Mammary epithelial cell (primary cell): ENCODE measurements at regions of chr5 and their contacts with region 1.

Region 1: DNA sequence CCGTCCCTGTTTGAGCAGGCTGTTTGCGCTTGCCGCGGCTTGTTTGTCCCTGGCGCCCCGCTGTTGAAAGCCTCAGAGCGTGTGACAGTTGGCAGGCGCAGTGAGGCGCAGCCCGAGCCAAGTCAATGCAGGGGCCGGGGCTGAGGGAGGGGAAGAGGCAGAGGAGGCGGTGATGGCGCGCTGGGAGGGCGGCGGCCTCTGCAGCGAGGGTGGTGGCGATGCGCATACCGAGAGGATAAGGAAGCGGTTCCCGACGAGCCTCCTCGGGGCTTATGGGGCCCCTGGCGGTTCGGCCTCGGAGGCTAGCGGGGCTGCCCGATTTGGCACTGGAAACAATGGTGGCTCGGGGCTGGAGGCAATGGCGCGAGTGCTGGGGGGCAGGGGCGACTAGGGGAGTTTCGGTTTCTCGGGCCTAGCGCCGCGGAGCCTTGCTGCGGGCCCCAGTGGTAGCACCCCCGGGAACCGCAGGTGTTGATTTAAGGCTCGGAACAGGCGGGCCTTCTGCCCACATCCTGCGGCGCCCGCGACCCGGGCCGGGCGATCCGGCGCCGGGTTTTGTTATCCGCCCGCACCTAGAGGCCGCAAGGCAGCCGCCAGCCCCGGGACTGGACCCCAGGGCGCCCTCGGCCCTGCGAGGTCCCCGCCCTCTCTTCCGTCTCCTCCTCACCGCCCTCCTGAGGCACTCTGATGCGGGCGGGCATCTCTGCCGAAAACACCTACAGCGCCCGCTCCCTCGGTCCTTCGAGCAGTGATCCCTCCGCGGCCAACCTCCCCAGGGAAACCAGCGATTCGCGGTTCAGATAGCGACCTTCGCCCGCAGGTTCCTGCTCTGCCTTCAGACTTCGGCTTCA is 947 bp upstream of the LNPEP start:
- DNase-seq: peak; percentile 97
- H3K4me3 ChIP-seq: peak overlapping the region; percentile 85 to 94 (median 86)
- H3K27ac ChIP-seq: peak overlapping the region; percentile 92
- H3K4me1 ChIP-seq: peaks cover 24% of the 10 kb centered on the region
- H3K27me3 ChIP-seq: no peaks in the 10 kb centered on the region
- CTCF ChIP-seq: peak in 1 of 2 donors; percentile 6

Region 2: GRCh38 chr5:96807075-96807654 is 127.8 kb before region 1 on chr5:
- CTCF ChIA-PET with region 1: no interaction called
- dilution Hi-C with region 1: no loop called
- in situ Hi-C with region 1: no loop called
- intact Hi-C with region 1: loop called (anchors 1 kb)
- DNase-seq: peak; percentile 67
- H3K4me3 ChIP-seq: peak overlapping the region; percentile 72 to 92 (median 78)
- H3K27ac ChIP-seq: peak overlapping the region; percentile 91
- H3K4me1 ChIP-seq: peaks cover 23% of the 10 kb centered on the region
- H3K27me3 ChIP-seq: no peaks in the 10 kb centered on the region
- CTCF ChIP-seq: no peak

Region 3: DNA sequence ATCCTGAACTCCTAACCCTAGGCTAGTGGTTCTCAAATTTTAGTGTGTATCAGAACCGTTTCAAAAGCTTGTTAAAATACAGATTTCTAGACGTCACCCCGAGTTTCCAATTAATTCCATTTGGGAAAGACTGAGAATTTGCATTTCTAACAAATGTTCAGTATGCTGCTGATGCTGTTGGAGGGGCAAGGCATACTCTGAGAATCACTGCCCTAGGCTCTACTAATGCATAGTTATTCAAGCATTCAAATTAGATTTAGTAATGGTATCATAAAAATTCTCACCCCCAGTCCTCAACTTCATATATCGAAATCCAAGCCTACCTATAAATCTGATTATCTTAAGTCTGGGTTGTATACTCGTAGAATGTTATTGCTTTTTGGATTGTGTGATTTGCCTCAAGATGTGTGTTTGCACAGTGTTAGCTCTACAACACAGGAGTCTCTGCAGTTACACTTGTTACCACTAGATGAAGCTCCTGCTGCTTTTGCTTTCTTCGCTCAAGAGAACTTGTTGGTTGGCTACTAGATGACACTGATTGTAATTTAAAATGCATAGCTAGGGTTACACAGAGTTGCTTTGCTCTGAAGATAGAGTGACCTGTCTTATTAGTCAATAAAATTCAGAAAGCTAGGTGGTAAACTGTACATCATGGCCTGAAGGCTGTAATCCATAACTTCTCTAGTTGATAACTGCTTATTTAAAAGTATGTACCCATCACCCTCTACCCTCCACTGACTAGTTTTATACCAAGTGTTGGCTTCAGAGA is 66.1 kb before region 1 on chr5:
- CTCF ChIA-PET with region 1: no interaction called
- dilution Hi-C with region 1: no loop called
- in situ Hi-C with region 1: no loop called
- intact Hi-C with region 1: loop called (anchors 2 kb)
- DNase-seq: peak; percentile 57
- H3K4me3 ChIP-seq: no peak overlapping the region
- H3K27ac ChIP-seq: no peak overlapping the region
- H3K4me1 ChIP-seq: peaks cover 13% of the 10 kb centered on the region
- H3K27me3 ChIP-seq: no peaks in the 10 kb centered on the region
- CTCF ChIP-seq: peak; percentile 99

Region 4: DNA sequence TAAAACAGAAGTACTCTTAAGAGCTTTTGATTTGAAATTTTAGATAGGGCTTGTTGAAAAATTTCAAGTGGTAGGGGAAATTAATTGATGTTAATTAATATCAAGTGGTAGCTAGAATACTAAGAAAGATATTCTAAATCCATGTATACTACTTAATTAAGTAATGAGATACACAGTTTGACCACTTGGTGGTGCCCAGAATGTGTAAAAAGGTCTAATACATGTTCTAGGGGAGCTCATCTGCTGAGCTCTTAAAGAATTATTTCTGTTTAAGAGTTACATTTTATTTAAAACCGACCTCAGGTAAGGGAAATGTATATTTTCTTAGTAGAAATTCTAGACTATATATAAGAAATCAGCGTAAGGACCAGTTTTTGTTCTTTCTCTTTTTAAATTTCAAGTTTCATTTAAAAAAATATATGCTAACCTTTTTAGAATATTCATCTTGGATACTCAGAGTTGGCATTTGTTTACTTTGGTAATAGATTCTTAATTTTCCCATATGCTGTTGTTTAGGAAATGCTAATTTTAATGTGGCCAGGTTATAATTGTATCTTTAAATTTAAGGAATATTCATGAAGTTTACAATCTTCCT is 62.4 kb after region 1 on chr5:
- CTCF ChIA-PET with region 1: no interaction called
- dilution Hi-C with region 1: no loop called
- in situ Hi-C with region 1: no loop called
- intact Hi-C with region 1: loop called (anchors 2 kb)
- DNase-seq: peak; percentile 25
- H3K4me3 ChIP-seq: no peak overlapping the region
- H3K27ac ChIP-seq: no peak overlapping the region
- H3K4me1 ChIP-seq: no peaks in the 10 kb centered on the region
- H3K27me3 ChIP-seq: no peaks in the 10 kb centered on the region
- CTCF ChIP-seq: peak; percentile 49 to 51

Region 5: DNA sequence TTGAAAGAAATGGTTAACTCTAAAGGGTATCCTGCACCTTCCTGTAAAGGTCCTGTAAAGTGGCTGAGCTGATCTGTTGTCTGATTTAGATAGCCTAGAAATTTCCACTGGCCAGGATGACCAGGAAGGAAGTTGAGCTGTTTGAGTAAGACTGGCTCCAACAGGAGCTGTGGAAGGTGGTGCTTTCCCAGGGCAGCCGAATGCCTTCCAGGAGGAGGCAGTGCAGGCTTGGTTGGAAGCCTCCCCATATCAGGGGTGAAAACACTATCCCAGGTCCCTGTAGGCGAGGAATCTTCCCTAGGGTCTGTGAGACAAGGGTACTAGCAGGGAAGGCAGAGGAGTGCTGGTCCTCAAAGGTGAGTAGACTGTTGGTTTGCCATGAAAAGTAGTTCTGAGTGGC is 109.1 kb after region 1 on chr5:
- CTCF ChIA-PET with region 1: no interaction called
- dilution Hi-C with region 1: no loop called
- in situ Hi-C with region 1: no loop called
- intact Hi-C with region 1: no loop called
- DNase-seq: peak; percentile 35
- H3K4me3 ChIP-seq: no peak overlapping the region
- H3K27ac ChIP-seq: no peak overlapping the region
- H3K4me1 ChIP-seq: no peaks in the 10 kb centered on the region
- H3K27me3 ChIP-seq: no peaks in the 10 kb centered on the region
- CTCF ChIP-seq: peak; percentile 37 to 42

Region 6: GRCh38 chr5:97167435-97167834 is 232.5 kb after region 1 on chr5:
- CTCF ChIA-PET with region 1: interaction called, 11 read pairs
- dilution Hi-C with region 1: no loop called
- in situ Hi-C with region 1: no loop called
- intact Hi-C with region 1: loop called (anchors 2 kb)
- DNase-seq: no peak
- H3K4me3 ChIP-seq: no peak overlapping the region
- H3K27ac ChIP-seq: no peak overlapping the region
- H3K4me1 ChIP-seq: no peaks in the 10 kb centered on the region
- H3K27me3 ChIP-seq: no peaks in the 10 kb centered on the region
- CTCF ChIP-seq: no peak